Natural killer cell (primary cell): ENCODE measurements at regions of chr6 and their contacts with region 1.

Region 1: GRCh38 chr6:32940656-32941213 is at the start of gene HLA-DMB:
- DNase-seq: peak; percentile 31 to 90
- ATAC-seq: peak; percentile 71 to 80 (median 78)
- H3K4me3 ChIP-seq: peak within 1 kb of the TSS; percentile 74
- H3K4me3 Mint-ChIP-seq: peak within 1 kb of the TSS; percentile 88
- H3K27ac ChIP-seq: peak within 1 kb of the TSS; percentile 96
- H3K27ac Mint-ChIP-seq: peak within 1 kb of the TSS; percentile 92 to 98
- H3K4me1 ChIP-seq: peaks cover 75% of the 10 kb centered on the region
- H3K4me1 Mint-ChIP-seq: peaks cover 59 to 60% of the 10 kb centered on the region in 2 donors
- H3K27me3 ChIP-seq: no peaks in the 10 kb centered on the region
- H3K27me3 Mint-ChIP-seq: no peaks in the 10 kb centered on the region
- CTCF ChIP-seq: no peak
- total RNA-seq, gene HLA-DMB: 19.5 to 28.1 (median 23.0) TPM

Region 2: GRCh38 chr6:32894080-32895005 is 46.4 kb before region 1 on chr6:
- intact Hi-C with region 1: loop called (anchors 5 kb)
- DNase-seq: peak; percentile 94 to 97
- ATAC-seq: peak; percentile 97 to 99 (median 98)
- H3K4me3 ChIP-seq: peak overlapping the region; percentile 88
- H3K4me3 Mint-ChIP-seq: peak overlapping the region; percentile 98
- H3K27ac ChIP-seq: peak overlapping the region; percentile 95
- H3K27ac Mint-ChIP-seq: peak overlapping the region; percentile 91 to 97
- H3K4me1 ChIP-seq: peaks cover 26% of the 10 kb centered on the region
- H3K4me1 Mint-ChIP-seq: peaks cover 42 to 47% of the 10 kb centered on the region in 2 donors
- H3K27me3 ChIP-seq: no peaks in the 10 kb centered on the region
- H3K27me3 Mint-ChIP-seq: no peaks in the 10 kb centered on the region
- CTCF ChIP-seq: no peak

Region 3: DNA sequence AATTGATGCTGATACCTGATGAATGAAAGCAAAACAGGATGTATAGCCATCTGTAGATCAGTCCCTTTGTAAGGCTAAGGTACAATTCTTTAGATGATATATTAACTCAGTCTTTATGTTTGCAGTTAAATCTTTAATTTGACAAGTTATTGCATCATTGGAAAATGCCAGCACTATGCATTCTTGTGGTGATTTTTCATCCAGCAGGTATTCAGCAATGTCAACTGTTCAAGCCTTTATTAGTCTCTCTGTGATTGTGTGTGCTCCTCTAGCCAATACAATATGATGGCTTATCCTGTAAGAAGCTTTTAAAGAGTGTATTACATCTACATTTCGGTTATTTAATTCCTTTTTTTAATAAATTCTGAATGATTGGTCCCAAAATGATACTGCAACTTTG is 34.2 kb before region 1 on chr6:
- intact Hi-C with region 1: no loop called
- DNase-seq: no peak
- ATAC-seq: no peak
- H3K4me3 ChIP-seq: no peak overlapping the region
- H3K4me3 Mint-ChIP-seq: no peak overlapping the region
- H3K27ac ChIP-seq: no peak overlapping the region
- H3K27ac Mint-ChIP-seq: no peak overlapping the region
- H3K4me1 ChIP-seq: no peaks in the 10 kb centered on the region
- H3K4me1 Mint-ChIP-seq: no peaks in the 10 kb centered on the region
- H3K27me3 ChIP-seq: no peaks in the 10 kb centered on the region
- H3K27me3 Mint-ChIP-seq: peaks cover 0 to 4% of the 10 kb centered on the region in 2 donors
- CTCF ChIP-seq: no peak